ENCODE measurements at regions of chr14 and their contacts with region 1.

Region 1: DNA sequence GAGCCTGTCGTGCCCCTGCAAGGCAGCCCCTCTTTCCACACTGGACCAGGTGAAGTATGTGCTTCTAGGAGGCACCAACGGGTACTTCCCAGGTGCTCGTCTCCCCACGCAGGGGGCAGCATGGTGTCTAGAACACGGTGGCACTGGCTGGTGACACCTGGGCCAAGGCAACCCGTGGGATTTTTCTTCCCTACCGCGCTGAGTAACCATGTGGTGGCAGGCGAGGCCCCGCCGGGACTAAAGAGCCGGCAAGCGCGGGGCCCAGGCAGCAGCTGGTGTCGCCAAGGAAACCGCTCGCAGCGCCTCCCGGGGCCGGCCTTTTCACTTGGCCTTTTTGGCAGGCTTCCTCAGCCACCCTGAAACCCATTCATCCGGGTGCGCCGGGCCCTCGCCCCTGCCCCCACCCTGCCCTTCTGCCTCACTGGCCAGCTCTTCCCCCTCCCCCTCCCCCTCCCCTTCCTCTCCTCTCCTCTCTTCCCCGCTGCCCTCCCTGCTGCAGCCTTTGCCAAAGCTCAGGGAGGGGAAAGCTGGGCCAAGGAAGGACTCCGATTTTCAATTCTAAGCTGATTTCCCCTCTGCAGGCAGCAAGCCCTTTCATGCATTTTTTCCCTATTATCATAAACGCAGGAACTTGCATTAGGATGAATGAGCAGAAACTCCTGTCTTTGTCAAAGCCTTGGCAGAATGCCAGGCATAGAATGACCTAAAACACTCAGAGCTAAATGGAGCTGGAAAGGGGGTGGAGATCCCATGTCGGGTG is 81.2 kb downstream of the IRF2BPL start:
- DNase-seq: peak; percentile 97 to 98
- H3K4me3 ChIP-seq: no peak overlapping the region
- H3K4me1 ChIP-seq: peaks cover 32% of the 10 kb centered on the region
- H3K27me3 ChIP-seq: no peaks in the 10 kb centered on the region

Region 2: GRCh38 chr14:76067536-76067935 is 879.7 kb before region 1 on chr14:
- in situ Hi-C with region 1: no loop called
- DNase-seq: no peak
- H3K4me3 ChIP-seq: no peak overlapping the region
- H3K4me1 ChIP-seq: no peaks in the 10 kb centered on the region
- H3K27me3 ChIP-seq: no peaks in the 10 kb centered on the region

Region 3: GRCh38 chr14:77033622-77034521 is 86.6 kb after region 1 on chr14:
- in situ Hi-C with region 1: loop called (anchors 5 kb)
- DNase-seq: peak; percentile 79 to 91
- H3K4me3 ChIP-seq: peak overlapping the region; percentile 33
- H3K4me1 ChIP-seq: peaks cover 50% of the 10 kb centered on the region
- H3K27me3 ChIP-seq: no peaks in the 10 kb centered on the region

Region 4: DNA sequence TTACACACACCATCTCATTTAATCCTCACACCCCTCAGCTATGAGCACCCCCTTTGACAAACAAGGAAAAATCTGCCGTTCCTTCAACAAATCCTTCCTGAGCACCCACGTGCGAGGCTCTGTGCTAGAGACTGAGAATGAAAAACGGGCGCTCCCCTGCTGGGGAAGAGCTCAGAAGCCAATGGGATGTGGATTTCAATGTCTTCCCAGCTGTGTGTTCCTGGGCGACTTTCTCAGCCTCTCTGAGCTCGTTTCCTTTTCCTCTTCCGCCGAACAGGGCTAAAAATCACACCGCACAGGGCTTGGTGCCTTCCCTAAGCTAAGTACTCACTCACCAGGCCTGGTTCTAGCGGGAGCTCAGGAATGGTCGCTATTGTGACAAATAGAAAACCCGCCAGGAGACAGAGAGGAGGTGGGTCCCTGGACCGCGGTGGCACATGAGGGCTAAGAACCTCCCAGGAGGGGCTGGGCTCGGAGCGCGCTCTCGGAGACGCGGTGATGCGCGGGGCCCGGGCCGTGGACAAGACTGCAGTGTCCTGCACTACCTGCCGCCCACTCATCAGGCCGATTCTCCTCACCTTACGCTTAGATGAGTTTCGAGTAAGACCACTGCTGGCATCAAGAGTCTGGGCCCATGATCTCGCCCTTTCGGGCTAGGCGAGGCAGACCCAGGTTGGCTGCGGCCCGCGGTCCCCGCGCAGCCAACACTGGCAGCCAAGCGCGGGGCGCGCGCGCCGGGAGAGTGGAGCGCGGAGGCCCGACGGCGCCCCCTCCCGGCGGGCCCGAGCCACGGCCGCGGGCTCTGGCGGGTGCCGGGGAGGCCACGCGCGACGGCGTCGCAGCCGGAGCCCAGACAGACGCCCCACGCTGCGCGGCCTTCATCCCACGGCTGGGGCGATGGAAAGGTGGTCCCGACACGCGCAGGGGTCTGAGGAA is 177.4 kb after region 1 on chr14:
- in situ Hi-C with region 1: no loop called
- DNase-seq: peak in 1 of 2 experiments; percentile 62
- H3K4me3 ChIP-seq: peak overlapping the region; percentile 39
- H3K4me1 ChIP-seq: no peaks in the 10 kb centered on the region
- H3K27me3 ChIP-seq: peaks cover 6% of the 10 kb centered on the region; the same call in 1 of the 2 replicates

Measured in HAP-1 (cell line).